ENCODE measurements at regions of chr14 and their contacts with region 1.

Region 1: DNA sequence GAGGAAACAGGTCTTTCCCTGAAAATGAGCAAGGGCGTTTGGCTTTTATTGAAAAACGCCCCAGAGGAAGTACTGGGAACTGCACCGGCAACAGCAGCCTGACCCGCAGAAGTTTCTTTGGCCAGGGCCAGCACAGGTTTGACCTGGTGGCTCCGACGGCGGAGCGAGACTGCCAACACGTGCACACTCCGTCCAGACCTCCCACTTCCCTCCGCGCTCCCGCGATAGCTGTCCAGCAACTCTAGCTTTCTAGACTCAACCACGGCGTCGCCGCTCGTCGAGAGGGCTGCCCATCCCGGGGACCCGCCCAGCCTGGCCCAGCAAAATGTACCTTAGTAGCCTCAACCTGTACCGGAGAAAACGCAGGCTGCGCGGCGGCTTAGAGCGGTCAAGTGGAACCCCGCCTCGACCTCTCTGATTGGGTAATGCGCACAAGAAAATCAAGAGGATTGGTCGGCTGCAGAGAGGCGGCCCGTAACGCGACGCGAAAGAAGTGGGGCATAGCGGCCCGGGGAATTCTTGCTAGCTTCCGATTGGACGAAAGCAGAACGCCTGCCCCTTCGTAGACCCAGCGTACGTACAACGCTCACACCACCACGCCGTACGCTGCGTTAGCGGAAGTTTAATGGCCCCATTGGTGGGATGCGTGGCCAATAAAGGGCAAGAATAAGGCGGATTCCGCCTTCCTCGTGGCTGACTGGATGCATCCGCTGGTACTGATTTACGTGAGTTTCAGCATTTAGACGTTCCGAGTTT is at the start of gene WDR89:
- DNase-seq: peak; percentile 98 to 99
- ATAC-seq: peak; percentile 91 to 93
- H3K4me3 ChIP-seq: peak within 1 kb of the TSS; percentile 68 to 88 (median 78)
- H3K27ac ChIP-seq: peak within 1 kb of the TSS; percentile 90 to 97 (median 92)
- H3K4me1 ChIP-seq: peaks cover 5 to 12% of the 10 kb centered on the region in 2 donors
- H3K27me3 ChIP-seq: no peaks in the 10 kb centered on the region
- CTCF ChIP-seq: peak; percentile 90 to 92 (median 91)
- POLR2A ChIP-seq: peak; percentile 41 to 62
- total RNA-seq, gene WDR89: 3.5 to 6.2 (median 5.1) TPM

Region 2: DNA sequence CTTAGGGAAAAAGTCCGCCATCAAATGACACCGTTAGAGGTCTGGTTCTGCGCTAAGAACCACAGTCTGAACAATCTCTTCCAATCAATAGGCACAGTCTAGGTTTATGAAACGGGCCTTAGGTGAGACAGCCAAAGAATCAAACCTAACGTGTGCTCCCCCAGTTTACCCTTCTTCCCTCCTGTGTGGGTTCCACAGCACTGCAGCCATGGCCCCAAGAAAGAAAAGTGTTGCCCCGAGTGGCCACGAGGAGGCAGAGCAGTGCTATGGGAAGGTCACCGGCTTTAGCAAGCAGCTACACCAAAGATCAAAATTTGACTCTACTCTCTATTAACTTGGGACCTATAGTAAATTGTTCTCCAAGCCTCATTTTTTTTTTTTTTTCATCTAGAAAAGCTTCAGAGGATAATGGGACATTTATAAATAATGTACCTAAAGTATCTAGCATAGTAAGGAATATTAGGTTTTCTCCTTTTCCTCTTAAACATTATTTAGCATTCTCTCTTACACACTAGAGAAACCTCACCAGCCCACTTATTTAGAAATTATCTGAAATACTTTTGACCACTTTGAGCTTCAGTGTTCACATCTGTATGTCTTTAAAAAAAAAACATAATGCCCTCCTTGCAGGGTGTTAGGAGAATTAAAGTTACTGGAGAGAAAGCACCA is 252.8 kb before region 1 on chr14:
- in situ Hi-C with region 1: loop called in 1 of 4 experiments (anchors 25 kb)
- intact Hi-C with region 1: loop called (anchors 5 kb)
- DNase-seq: peak; percentile 12 to 41
- ATAC-seq: peak; percentile 76 to 90
- H3K4me3 ChIP-seq: no peak overlapping the region
- H3K27ac ChIP-seq: no peak overlapping the region
- H3K4me1 ChIP-seq: no peaks in the 10 kb centered on the region
- H3K27me3 ChIP-seq: no peaks in the 10 kb centered on the region
- CTCF ChIP-seq: peak; percentile 61 to 81 (median 78)
- POLR2A ChIP-seq: no peak

Region 3: DNA sequence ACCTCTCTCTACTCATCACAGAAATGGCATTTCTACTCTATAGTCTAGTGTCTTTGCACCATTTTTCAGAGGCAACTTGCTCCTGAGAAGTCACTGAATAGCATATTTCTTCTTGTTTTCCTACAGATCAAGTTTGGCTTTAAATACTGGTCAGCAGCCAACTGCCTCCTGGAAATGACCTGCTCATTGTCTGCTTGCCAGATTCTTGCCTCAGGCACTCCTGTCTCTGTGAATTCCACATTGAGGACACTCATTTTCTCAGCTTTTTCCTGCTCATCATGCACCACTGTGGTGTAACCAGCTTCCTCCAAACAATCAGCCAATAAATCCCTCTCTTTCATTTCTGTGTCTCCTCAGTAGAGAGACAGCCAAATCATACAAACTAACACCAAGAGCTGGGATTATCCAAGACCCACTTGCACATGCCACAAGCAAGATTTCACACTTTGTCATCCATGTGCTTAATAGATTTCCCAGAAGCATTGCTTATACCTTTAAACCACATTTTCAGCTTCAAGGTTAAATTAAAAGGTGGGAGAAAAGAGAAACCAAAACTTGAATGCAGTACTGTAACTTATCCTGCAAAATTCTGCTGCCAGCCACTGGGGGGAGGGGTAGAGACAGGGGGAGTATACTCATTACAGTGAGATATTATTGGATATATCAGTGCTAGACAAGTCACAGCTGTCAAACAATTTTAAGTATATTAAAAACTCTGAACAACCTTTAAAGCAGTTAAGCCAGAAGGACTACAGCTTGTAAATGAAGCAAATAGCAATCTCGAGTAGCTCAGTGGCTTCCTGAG is 203.5 kb before region 1 on chr14:
- in situ Hi-C with region 1: no loop called
- intact Hi-C with region 1: loop called (anchors 5 kb)
- DNase-seq: peak in 1 of 2 donors; percentile 37
- ATAC-seq: peak; percentile 6 to 17
- H3K4me3 ChIP-seq: peak overlapping the region in 3 of 4 donors; percentile 11 to 23 (median 16)
- H3K27ac ChIP-seq: peak overlapping the region; percentile 74 to 88 (median 85)
- H3K4me1 ChIP-seq: peaks cover 58 to 68% of the 10 kb centered on the region in 2 donors
- H3K27me3 ChIP-seq: no peaks in the 10 kb centered on the region
- CTCF ChIP-seq: peak in 1 of 5 experiments; percentile 36
- POLR2A ChIP-seq: no peak

Region 4: DNA sequence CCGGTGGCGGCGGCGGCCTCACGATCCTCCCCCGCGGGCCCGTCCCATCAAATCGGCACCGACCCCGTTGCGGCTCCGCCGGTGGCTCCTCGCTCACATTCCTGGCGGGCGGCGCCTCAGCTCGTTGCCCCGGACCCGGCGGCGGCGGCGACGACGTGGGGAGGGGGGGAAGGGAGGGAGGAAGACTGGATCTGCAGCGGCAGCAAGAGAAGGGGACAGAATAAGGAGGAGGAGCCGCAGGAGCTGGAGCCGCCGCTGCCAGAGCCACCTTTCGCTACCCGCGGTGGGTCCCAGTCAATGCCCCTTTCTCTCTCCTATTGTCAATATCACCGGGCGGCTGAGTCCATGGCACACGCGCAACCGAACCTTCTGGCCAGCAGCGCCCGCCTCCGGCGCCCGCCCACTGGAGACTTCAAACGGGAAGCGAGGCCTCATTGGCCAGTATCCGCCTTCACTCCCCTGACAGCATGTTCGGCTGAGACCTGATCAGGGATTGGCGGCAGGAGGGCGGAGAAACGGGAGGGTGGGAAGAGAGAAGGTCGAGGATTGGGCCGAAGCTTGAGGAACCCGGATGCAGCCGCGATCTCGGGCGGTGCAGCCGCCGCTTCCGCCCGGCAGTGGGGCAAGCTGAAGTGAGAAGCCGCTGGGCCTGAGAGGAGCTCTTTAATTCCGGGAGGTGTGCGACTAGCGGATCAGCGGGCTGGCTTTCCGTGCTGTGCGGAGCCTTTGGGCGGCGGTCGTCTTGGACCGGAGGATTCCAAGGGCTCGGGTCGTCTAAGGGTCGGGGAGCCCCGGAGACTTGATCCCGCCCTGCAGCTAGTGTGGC is 98.4 kb before region 1 on chr14 and contains the start of gene PPP2R5E:
- in situ Hi-C with region 1: loop called in 2 of 4 experiments (anchors 10 kb)
- intact Hi-C with region 1: loop called (anchors 1 kb)
- DNase-seq: peak; percentile 99
- ATAC-seq: peak; percentile 99
- H3K4me3 ChIP-seq: peak within 1 kb of the TSS; percentile 73 to 98 (median 92)
- H3K27ac ChIP-seq: peak within 1 kb of the TSS; percentile 87 to 96 (median 95)
- H3K4me1 ChIP-seq: peaks cover 28 to 30% of the 10 kb centered on the region in 2 donors
- H3K27me3 ChIP-seq: no peaks in the 10 kb centered on the region
- CTCF ChIP-seq: no peak
- POLR2A ChIP-seq: peak; percentile 77 to 85
- total RNA-seq, gene PPP2R5E: 14.6 to 25.8 (median 22.3) TPM

Region 5: DNA sequence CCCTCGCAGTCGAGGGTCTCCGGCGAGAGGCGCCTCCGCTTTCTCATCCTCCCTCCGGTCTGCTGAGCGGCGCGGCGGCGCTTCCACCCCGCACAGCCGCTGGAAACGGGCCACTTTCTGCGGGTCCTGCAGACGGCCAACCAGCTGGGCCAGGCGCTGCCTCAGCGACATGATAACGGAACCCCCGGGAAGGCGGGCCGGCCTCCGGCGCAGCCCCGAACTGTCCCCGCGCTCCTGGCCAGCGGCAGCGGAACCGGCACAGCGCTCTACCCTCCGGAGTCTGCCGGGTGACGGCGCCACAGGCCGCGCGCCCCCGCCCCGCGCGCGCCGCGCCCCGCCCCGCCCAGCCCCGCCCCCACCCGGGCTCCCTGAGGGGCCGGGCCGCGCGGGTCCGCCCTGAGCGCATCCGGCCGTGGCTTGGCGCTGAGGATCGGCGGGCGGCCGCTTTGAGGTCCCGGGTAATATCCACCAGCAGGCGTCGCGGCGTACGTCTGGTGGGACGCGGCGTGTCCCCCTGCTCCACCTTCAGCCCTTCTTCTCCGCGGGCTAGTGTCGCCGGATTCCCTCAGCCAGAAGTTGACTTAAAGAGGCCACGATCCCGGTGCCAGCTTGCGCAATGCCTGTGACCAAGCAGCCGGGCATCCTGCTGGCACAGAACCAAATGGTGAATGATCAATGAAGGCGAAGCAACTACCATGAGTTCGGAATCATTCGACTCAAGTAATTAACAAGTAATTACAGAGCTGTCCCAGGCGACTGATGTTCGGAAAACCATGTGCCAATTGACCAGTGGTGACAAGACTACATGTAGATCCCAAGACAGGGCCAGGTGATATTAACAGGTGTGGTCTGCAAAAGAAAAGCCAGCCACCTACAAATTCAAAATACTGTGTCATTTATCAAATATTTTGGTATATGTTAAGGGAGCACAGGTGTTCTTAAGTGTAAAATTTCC is 86.4 kb after region 1 on chr14 and contains the start of gene SGPP1:
- in situ Hi-C with region 1: no loop called
- intact Hi-C with region 1: loop called (anchors 2 kb)
- DNase-seq: peak; percentile 29 to 66
- ATAC-seq: peak; percentile 87 to 91
- H3K4me3 ChIP-seq: peak within 1 kb of the TSS; percentile 83 to 92 (median 88)
- H3K27ac ChIP-seq: peak within 1 kb of the TSS; percentile 82 to 90 (median 86)
- H3K4me1 ChIP-seq: peaks cover 17 to 18% of the 10 kb centered on the region in 2 donors
- H3K27me3 ChIP-seq: no peaks in the 10 kb centered on the region
- CTCF ChIP-seq: peak in 2 of 5 experiments; percentile 36 to 43
- POLR2A ChIP-seq: peak; percentile 64 to 66
- total RNA-seq, gene SGPP1: 3.5 to 11.3 (median 8.1) TPM

Region 6: DNA sequence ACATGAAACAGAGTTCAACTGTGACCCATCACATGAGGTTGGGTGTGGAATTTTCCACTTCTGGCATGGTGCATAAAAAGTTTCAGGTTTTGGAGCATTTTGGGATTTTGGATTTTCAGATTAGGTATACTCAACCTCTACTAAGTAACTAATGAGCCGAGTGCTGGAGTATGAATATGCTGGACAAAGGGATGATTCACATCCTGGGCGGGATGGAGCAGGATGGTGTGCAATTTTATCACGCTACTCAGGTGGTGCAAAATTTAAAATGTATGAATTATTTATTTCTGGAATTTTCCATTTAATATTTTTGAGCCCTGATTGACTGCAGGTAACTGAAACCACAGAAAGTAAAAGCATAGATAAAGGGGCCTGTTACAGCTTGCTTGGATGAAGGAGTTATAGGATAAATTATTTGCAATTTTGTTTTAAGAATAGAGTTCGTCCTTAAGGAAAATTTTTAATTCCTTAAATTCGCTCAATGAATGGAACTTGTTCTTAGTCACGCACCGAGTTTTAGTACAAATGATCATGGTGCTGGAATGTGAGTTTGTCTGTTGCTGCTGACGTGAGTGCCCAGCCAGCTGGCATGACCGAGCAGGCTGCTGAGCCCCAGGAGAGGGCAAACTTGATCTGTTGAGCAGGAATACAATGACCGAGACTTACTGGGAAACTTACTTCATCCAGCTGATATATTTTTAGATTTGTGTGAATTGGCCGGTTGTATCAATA is 476.2 kb after region 1 on chr14:
- in situ Hi-C with region 1: no loop called
- intact Hi-C with region 1: loop called (anchors 5 kb)
- DNase-seq: peak; percentile 84 to 90
- ATAC-seq: peak; percentile 71 to 79
- H3K4me3 ChIP-seq: no peak overlapping the region
- H3K27ac ChIP-seq: peak overlapping the region; percentile 89 to 94 (median 92)
- H3K4me1 ChIP-seq: peaks cover 34 to 61% of the 10 kb centered on the region in 2 donors
- H3K27me3 ChIP-seq: no peaks in the 10 kb centered on the region
- CTCF ChIP-seq: no peak
- POLR2A ChIP-seq: no peak

Measured in gastrocnemius medialis (tissue), 4 donors.